ENCODE measurements at regions of chr1 and their contacts with region 1.

Region 1: DNA sequence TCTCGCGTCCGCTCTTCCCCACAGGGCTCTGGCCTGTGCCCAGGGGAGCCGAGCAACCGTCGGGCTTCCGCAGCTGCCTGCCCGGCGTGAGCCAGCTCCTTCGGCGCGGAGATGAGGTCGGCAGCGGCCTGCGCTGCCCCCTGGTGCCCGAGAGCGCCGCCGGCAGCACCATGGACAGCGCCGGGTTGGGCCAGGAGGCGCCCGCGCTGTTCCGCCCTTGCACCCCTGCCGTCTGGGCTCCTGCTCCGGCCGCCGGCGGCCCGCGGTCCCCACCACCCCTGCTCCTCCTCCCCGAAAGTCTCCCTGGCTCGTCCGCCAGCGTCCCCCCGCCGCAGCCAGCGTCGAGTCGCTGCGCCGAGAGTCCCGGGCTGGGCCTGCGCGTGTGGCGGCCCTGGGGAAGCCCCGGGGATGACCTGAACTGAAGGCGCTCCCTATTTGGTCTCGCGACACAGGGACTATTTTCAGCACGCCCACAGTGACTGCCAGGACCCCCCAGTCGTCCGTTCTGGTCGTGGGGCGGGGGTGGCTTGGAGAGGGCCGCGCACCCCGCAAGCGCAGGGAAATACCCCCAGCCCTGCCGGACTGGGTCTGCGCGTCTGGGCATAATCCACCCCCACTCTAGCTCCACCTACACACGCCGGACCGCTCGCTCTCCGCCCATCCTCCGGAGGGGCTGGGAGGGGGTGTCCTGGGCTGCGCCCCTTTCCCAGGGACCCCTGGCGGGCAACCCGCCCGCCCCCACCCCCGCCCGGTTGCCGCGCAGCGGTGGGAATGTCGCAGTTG is 1.3 kb downstream of the HES3 start:
- DNase-seq: peak; percentile 43 to 92 (median 75)
- ATAC-seq: peak; percentile 88
- H3K4me3 ChIP-seq: no peak overlapping the region
- H3K4me3 Mint-ChIP-seq: peak overlapping the region in 1 of 10 donors; percentile 43
- H3K27ac ChIP-seq: no peak overlapping the region
- H3K27ac Mint-ChIP-seq: no peak overlapping the region
- H3K4me1 ChIP-seq: peaks cover 3 to 13% of the 10 kb centered on the region in 2 donors
- H3K4me1 Mint-ChIP-seq: peaks cover 5 to 19% (median 12%) of the 10 kb centered on the region in 7 donors
- H3K27me3 ChIP-seq: peaks cover 20 to 45% of the 10 kb centered on the region in 2 donors
- H3K27me3 Mint-ChIP-seq: peaks cover 37 to 73% (median 45%) of the 10 kb centered on the region in 5 donors

Region 2: DNA sequence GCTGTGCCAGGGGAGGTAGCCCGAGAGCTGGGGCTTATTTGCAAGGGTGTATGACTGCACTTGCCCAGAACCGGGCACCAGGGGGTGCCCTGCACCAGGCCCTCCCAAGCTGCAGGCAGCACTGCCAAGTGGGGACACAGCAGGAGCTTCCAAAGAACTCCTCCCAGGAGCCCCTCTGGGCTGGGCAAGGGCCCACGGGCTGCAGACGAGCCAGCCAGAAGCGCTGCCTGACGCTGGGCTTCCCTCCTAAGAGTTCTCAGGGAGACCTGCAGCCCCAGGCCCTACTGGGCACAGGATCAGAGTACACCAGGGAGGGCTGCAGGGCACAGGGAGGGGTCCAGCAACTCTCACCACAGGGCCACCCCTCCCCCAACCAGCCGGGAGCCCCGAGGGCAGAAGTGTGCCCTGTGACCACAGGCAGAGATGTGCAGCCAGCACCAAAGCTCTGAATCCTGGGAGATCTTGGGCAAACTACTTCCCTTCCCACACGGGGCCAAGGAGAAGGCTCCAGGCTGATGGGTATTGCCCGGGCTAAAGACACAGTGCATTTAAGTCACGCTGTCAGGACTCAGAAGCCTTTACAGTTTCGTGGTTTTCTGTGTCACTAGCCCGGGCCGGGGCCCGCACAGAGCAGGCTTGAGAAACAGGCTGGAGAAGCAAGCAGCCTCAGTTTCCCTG is 136.2 kb before region 1 on chr1:
- CTCF ChIA-PET with region 1: no interaction called
- POLR2A ChIA-PET with region 1: no interaction called
- intact Hi-C with region 1: loop called in 1 of 2 experiments (anchors 2 kb)
- DNase-seq: peak in 2 of 9 donors; percentile 29 to 46
- ATAC-seq: peak; percentile 78
- H3K4me3 ChIP-seq: no peak overlapping the region
- H3K4me3 Mint-ChIP-seq: no peak overlapping the region
- H3K27ac ChIP-seq: no peak overlapping the region
- H3K27ac Mint-ChIP-seq: peak overlapping the region in 1 of 9 donors; percentile 13
- H3K4me1 ChIP-seq: no peaks in the 10 kb centered on the region
- H3K4me1 Mint-ChIP-seq: peaks cover 0 to 5% (median 0%) of the 10 kb centered on the region in 7 donors
- H3K27me3 ChIP-seq: no peaks in the 10 kb centered on the region
- H3K27me3 Mint-ChIP-seq: peaks cover 0 to 25% (median 9%) of the 10 kb centered on the region in 5 donors

Region 3: DNA sequence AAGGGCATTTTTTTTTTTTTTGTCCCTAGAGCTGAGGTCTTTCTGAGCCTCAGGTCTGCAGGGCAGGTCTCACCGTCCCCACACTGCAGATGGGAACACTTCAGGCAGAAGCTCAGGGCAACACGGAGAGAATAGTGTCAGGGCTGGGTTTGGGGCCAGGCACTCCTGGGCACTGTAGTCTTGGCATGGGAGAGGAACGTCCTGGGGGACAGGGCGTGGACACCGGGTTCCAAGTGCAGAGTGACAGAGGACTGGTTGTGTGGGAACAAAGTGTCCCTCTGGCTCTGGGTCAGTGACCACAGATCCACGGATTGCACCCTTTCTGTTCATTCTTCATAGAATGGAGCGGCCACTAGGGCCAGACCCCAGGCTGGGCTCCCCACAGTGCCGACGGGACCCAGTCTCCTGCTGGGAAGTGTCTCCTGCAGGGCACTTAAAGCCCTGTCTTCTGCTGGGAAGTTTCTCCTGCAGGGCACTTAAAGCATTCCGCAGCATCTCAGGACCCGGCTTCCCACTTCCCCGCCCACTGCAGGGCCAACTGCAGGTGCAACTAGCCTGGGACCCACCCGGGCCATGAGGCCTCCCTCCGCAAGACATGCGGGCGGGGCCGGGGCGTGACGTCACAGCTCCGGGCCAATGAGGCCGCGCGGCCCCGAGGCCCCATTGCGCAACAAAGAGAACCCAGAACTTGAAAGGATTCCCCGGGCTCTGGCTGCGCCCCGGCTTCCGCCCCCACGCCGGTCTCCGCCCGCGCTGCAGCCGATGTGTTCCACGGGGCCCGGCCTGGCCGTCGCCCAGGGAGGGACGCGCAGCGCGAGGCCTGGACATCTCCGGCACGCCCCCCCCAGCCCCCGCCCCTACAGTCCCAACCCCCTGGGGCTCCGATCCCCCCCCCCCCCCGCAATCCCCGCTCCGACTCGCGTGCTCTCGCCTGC is 14.5 kb after region 1 on chr1:
- CTCF ChIA-PET with region 1: no interaction called
- POLR2A ChIA-PET with region 1: no interaction called
- intact Hi-C with region 1: loop called in 1 of 2 experiments (anchors 1 kb)
- DNase-seq: peak; percentile 57 to 84 (median 69)
- ATAC-seq: peak; percentile 82
- H3K4me3 ChIP-seq: peak overlapping the region; percentile 16
- H3K4me3 Mint-ChIP-seq: peak overlapping the region; percentile 47 to 69 (median 63)
- H3K27ac ChIP-seq: no peak overlapping the region
- H3K27ac Mint-ChIP-seq: no peak overlapping the region
- H3K4me1 ChIP-seq: peaks cover 0 to 5% of the 10 kb centered on the region in 2 donors
- H3K4me1 Mint-ChIP-seq: peaks cover 0 to 8% (median 1%) of the 10 kb centered on the region in 7 donors
- H3K27me3 ChIP-seq: no peaks in the 10 kb centered on the region
- H3K27me3 Mint-ChIP-seq: peaks cover 0 to 26% (median 3%) of the 10 kb centered on the region in 5 donors

Region 4: GRCh38 chr1:6401673-6402072 is 156.4 kb after region 1 on chr1:
- CTCF ChIA-PET with region 1: interaction called, 7 read pairs
- POLR2A ChIA-PET with region 1: no interaction called
- intact Hi-C with region 1: loop called (anchors 1 kb)
- DNase-seq: no peak
- ATAC-seq: peak; percentile 77
- H3K4me3 ChIP-seq: no peak overlapping the region
- H3K4me3 Mint-ChIP-seq: no peak overlapping the region
- H3K27ac ChIP-seq: no peak overlapping the region
- H3K27ac Mint-ChIP-seq: no peak overlapping the region
- H3K4me1 ChIP-seq: no peaks in the 10 kb centered on the region
- H3K4me1 Mint-ChIP-seq: peaks cover 5 to 20% (median 5%) of the 10 kb centered on the region in 7 donors
- H3K27me3 ChIP-seq: no peaks in the 10 kb centered on the region
- H3K27me3 Mint-ChIP-seq: peaks cover 0 to 35% (median 0%) of the 10 kb centered on the region in 5 donors

Region 5: GRCh38 chr1:6475381-6476133 is 230.3 kb after region 1 on chr1:
- CTCF ChIA-PET with region 1: no interaction called
- POLR2A ChIA-PET with region 1: no interaction called
- intact Hi-C with region 1: loop called (anchors 1 to 2 kb)
- DNase-seq: peak; percentile 69 to 90 (median 77)
- ATAC-seq: peak; percentile 97
- H3K4me3 ChIP-seq: no peak overlapping the region
- H3K4me3 Mint-ChIP-seq: no peak overlapping the region
- H3K27ac ChIP-seq: no peak overlapping the region
- H3K27ac Mint-ChIP-seq: peak overlapping the region in 1 of 9 donors; percentile 22
- H3K4me1 ChIP-seq: peaks cover 0 to 6% of the 10 kb centered on the region in 2 donors
- H3K4me1 Mint-ChIP-seq: peaks cover 0 to 7% (median 2%) of the 10 kb centered on the region in 7 donors
- H3K27me3 ChIP-seq: no peaks in the 10 kb centered on the region
- H3K27me3 Mint-ChIP-seq: peaks cover 0 to 3% (median 0%) of the 10 kb centered on the region in 5 donors